ENCODE measurements at regions of chr3 and their contacts with region 1.

Region 1: DNA sequence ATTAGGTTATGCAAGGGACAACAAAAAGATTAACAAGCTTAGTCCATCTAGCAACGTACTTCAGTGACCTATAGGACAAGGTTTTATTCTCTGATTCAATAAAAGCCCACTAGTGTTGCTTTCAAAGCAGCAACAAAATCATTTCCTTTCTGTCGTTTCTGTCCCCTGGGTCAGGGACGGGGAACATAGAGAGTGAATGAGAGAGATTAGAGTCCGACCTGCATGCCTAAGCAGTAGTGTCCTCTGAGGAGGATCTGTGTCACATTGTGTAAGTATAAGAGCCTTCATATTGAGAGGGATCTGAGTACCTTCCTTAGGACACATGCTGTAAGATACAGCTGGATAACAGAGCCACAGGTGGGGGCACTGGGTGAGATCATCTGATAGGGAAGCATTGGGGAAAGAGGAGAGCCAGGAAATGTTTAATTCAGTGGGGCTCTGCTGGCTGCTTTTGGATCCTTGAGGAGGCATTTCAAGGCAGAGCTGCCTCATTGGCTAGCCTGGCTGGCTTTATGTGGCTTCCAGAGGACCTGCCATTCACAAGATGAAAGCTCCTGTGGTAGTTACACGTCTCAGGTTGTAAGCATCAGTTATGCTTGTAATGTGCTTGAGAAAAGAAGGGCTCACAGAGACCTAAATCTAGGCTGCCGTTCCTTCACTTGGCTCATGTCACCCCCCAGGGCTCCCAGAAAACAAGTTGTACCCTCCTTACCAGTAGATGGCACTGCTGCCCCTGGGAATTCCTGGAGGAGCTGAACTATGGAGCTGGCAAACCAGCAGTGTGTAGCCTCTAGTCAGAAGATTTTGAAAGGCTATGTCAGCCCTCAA is 2.7 kb downstream of the TMEM108 start:
- DNase-seq: peak; percentile 20
- ATAC-seq: peak; percentile 94
- H3K4me3 ChIP-seq: no peak overlapping the region
- H3K27ac ChIP-seq: no peak overlapping the region; the same call in 1 of the 2 replicates
- H3K4me1 ChIP-seq: peaks cover 19% of the 10 kb centered on the region; the same call in 1 of the 2 replicates
- H3K27me3 ChIP-seq: peaks cover 31% of the 10 kb centered on the region
- CTCF ChIP-seq: peak; percentile 93

Region 2: DNA sequence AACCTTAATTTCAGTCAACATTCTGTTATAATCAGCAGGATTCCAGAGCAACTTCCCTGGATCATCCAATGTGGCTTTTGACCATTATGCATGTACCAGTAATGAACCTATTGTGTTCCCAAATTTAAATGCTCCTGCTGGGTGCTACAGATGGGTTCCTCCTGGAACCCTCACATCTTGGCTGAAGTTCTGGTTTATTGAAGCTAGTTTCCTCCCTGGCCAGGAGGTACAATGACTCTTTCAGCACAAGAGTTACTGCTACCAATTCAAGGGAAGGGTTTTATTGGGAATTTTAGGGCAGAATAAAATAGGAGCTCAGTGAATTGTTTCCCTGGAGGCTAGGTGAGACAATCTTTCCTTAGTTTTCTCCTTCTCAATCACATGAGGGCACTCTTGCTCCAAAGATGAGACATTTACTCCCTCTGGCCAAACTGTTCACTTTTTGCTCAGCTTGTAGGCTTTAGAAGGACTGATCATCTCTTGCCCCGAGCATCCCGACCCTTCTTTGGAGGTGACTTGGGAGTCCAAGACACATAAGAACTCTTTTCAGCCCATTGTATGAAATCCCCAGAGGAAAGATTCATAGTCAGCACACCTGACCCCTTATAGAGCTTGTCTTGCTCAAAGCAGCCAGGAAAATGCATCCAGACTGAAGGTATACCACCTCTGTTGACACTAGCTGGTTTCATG is 309.9 kb before region 1 on chr3:
- CTCF ChIA-PET with region 1: interaction called, 5 read pairs
- POLR2A ChIA-PET with region 1: no interaction called
- in situ Hi-C with region 1: no loop called
- intact Hi-C with region 1: loop called (anchors 5 kb)
- DNase-seq: no peak
- ATAC-seq: peak; percentile 93
- H3K4me3 ChIP-seq: no peak overlapping the region
- H3K27ac ChIP-seq: no peak overlapping the region
- H3K4me1 ChIP-seq: peaks cover 5% of the 10 kb centered on the region; the same call in 1 of the 2 replicates
- H3K27me3 ChIP-seq: peaks cover 9% of the 10 kb centered on the region; the same call in 1 of the 2 replicates
- CTCF ChIP-seq: peak; percentile 74

Region 3: GRCh38 chr3:133384331-133385027 is 343.6 kb after region 1 on chr3:
- CTCF ChIA-PET with region 1: interaction called, 3 read pairs
- POLR2A ChIA-PET with region 1: no interaction called
- in situ Hi-C with region 1: no loop called
- intact Hi-C with region 1: loop called (anchors 2 kb)
- DNase-seq: peak; percentile 25
- ATAC-seq: peak; percentile 76
- H3K4me3 ChIP-seq: no peak overlapping the region
- H3K27ac ChIP-seq: peak overlapping the region; percentile 58; the same call in 1 of the 2 replicates
- H3K4me1 ChIP-seq: 0 out of 2 replicates have a peak, but pooled peaks cover 7% of the 10 kb centered on the region
- H3K27me3 ChIP-seq: no peaks in the 10 kb centered on the region
- CTCF ChIP-seq: peak; percentile 84

Region 4: GRCh38 chr3:133426721-133427120 is 385.8 kb after region 1 on chr3:
- CTCF ChIA-PET with region 1: interaction called, 18 read pairs
- POLR2A ChIA-PET with region 1: no interaction called
- in situ Hi-C with region 1: no loop called
- intact Hi-C with region 1: loop called (anchors 1 kb)
- DNase-seq: no peak
- ATAC-seq: no peak
- H3K4me3 ChIP-seq: no peak overlapping the region
- H3K27ac ChIP-seq: peak overlapping the region; percentile 32
- H3K4me1 ChIP-seq: peaks cover 17% of the 10 kb centered on the region
- H3K27me3 ChIP-seq: no peaks in the 10 kb centered on the region
- CTCF ChIP-seq: no peak

Measured in Panc1 (cell line).